HepG2 (cell line): ENCODE measurements at regions of chr7 and their contacts with region 1.

Region 1: GRCh38 chr7:69577221-69577620 is 21.1 kb upstream of the AUTS2 start:
- DNase-seq: no peak
- ATAC-seq: no peak
- H3K4me3 ChIP-seq: no peak overlapping the region
- H3K27ac ChIP-seq: no peak overlapping the region
- H3K4me1 ChIP-seq: no peaks in the 10 kb centered on the region
- H3K27me3 ChIP-seq: no peaks in the 10 kb centered on the region
- CTCF ChIP-seq: no peak
- EP300 ChIP-seq: no peak
- POLR2A ChIP-seq: no peak
- RAD21 ChIP-seq: no peak

Region 2: GRCh38 chr7:68288144-68288593 is 1289.1 kb before region 1 on chr7:
- CTCF ChIA-PET with region 1: no interaction called
- POLR2A ChIA-PET with region 1: no interaction called
- in situ Hi-C with region 1: no loop called
- intact Hi-C with region 1: loop called (anchors 5 kb)
- DNase-seq: no peak
- ATAC-seq: no peak
- H3K4me3 ChIP-seq: no peak overlapping the region
- H3K27ac ChIP-seq: no peak overlapping the region
- H3K4me1 ChIP-seq: no peaks in the 10 kb centered on the region
- H3K27me3 ChIP-seq: no peaks in the 10 kb centered on the region
- CTCF ChIP-seq: no peak
- EP300 ChIP-seq: no peak
- POLR2A ChIP-seq: no peak
- RAD21 ChIP-seq: no peak